ENCODE measurements at regions of chr1 and their contacts with region 1.

Region 1: DNA sequence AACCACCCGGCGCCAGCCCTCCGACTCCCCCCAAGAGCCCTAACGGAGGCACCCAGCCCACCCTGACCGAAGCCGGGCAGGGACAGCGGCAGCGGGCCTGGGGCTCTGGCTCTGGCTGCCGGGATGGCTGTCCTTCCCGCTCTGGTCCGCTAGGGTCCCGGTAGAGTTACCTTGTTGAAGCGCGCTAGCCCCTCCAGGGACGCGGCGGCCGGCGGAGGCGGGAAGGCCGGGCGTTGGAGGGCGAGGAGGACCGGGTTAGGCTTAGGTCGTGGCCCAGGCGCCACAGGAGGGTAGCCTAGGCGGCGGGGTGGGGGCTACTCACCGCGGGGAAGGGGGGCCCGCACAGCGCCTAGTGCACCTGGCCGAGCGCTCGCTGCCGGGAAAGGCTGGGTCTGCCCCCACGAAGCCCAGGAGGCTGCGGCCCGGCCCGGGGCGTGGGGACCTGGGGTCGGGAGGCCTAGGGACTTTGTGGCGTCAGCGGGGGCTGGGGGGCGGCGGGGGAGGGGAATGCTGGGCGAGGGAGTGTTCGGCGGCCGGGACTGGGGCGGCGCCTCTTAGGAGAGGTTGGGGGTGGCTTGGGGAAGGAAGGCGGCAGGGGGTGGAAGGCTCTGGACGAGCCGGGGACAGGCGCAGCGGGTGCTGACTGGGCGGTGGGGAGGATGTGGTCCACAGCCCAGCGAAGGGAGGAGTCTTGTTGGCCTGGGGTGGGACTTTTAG is at the start of gene TRIM17:
- DNase-seq: peak in 1 of 2 experiments; percentile 79
- H3K4me3 ChIP-seq: peak within 1 kb of the TSS; percentile 64
- H3K27ac ChIP-seq: peak within 1 kb of the TSS; percentile 93
- H3K4me1 ChIP-seq: peaks cover 67% of the 10 kb centered on the region
- H3K27me3 ChIP-seq: no peaks in the 10 kb centered on the region
- CTCF ChIP-seq: peak; percentile 63
- total RNA-seq, gene TRIM17: 47.4 and 55.5 TPM in 2 replicates

Region 2: GRCh38 chr1:228120857-228121489 is 295.4 kb before region 1 on chr1:
- CTCF ChIA-PET with region 1: no interaction called
- POLR2A ChIA-PET with region 1: no interaction called
- intact Hi-C with region 1: no loop called
- DNase-seq: no peak
- H3K4me3 ChIP-seq: no peak overlapping the region
- H3K27ac ChIP-seq: no peak overlapping the region
- H3K4me1 ChIP-seq: no peaks in the 10 kb centered on the region
- H3K27me3 ChIP-seq: no peaks in the 10 kb centered on the region
- CTCF ChIP-seq: no peak

Region 3: DNA sequence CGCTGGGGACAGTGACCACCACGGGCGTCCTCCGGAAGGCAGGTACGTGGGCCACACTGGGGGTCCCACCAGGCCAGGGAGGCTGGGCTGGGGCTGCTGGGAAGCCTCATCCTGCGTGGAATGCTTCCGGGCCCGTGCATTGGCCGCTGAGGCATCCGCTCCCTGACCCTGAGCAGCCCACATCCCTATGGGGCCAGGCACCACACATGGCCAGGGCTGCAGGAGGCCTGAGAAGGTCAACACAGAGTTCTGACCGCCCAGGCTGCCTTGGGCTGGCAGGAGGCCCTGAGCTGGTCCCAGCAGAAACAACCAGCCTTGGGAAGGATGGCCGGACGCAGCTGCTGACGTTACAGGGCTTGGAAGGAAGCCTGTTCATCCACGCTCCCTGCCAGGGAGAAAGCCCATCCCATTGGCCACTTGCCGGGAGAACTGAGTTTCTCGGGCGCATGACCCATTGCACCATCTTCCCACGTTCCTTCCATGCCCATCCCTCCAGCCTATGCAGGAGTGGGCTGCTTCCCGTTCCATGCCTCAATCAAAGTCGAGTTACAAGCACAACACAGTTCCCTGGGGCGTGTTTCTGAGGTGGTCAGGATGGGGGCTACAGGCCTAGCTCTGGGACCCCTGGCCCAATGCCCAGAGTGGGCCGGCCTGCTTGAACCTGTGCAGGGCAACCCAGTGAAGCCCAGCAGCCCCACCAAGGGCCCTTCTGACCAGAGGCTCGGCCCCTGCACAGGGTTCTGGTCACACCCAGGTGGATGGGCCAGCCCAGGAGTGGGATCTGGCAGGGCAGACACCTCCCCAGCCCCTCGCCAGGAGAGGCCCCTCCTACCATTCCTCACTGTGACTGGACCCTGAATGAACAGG is 41.4 kb before region 1 on chr1:
- CTCF ChIA-PET with region 1: no interaction called
- POLR2A ChIA-PET with region 1: no interaction called
- intact Hi-C with region 1: no loop called
- DNase-seq: no peak
- H3K4me3 ChIP-seq: no peak overlapping the region
- H3K27ac ChIP-seq: no peak overlapping the region
- H3K4me1 ChIP-seq: peaks cover 28% of the 10 kb centered on the region
- H3K27me3 ChIP-seq: no peaks in the 10 kb centered on the region
- CTCF ChIP-seq: no peak

Region 4: DNA sequence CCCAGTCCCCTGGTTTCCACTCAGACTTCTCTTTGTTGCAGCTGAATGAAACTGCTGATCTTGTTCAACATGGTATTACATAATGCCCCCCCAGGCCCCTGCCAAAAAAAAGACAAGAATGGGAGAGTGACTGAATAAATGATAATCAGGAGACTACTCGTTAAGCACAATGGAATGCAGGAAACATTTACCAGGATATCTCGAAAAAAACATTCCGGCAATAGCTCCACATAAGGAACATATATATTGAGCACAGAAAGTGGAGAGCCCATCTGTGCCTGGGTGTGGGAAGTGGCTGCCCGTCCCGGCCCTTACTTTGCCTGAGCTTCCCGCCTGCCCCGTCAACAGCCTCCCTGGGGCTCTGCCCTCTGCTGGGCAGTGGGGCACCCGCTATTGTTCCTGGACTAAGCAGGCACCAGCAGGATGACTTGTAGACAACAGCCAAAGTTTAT is 23.1 kb before region 1 on chr1:
- CTCF ChIA-PET with region 1: interaction called, 13 read pairs
- POLR2A ChIA-PET with region 1: no interaction called
- intact Hi-C with region 1: no loop called
- DNase-seq: peak; percentile 63 to 79
- H3K4me3 ChIP-seq: no peak overlapping the region
- H3K27ac ChIP-seq: peak overlapping the region; percentile 17; the same call in 1 of the 2 replicates
- H3K4me1 ChIP-seq: peaks cover 20% of the 10 kb centered on the region
- H3K27me3 ChIP-seq: no peaks in the 10 kb centered on the region
- CTCF ChIP-seq: peak; percentile 57; the same call in 1 of the 2 replicates

Region 5: DNA sequence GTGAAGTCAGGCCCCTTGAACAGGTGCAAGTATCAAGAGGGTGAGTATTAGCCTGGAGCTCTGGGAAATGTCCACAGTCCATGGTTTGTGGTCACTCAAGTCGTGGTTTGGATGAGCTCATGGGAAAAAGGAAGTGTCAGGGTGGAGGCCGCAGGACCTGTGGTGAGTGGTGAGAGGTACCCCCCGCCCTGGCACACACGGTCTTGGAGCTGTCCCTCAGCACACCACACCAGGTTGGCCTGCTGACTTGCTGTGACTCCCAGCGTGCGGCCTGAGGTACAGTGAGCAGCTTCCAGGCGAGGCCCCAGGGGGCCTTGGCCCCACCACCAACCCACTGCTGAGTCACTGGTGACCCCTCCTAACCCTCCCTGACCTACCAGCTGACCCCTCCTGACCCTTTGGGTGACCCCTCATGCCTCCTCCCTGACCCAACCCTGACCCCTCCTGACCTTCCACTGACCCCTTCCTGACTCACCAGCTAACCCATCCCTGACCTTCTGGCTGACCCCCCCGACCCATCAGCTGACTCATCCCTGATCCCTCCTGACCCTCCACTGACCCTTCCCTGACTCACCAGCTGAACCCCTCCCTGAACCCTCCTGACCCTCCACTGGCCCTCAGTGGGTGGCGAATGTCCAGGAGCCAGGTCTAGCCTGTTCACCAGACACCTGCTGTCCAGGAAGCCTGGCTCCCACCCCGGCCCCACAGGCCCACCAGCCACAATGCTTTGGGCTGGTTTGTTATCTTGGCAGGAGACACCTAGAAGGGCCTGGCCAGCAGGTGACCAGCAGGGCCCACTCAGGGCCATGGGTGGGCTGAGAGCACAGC is 36.0 kb after region 1 on chr1:
- CTCF ChIA-PET with region 1: no interaction called
- POLR2A ChIA-PET with region 1: interaction called, 6 read pairs
- intact Hi-C with region 1: loop called (anchors 1 kb)
- DNase-seq: peak; percentile 70 to 83
- H3K4me3 ChIP-seq: no peak overlapping the region
- H3K27ac ChIP-seq: peak overlapping the region; percentile 70
- H3K4me1 ChIP-seq: peaks cover 48% of the 10 kb centered on the region
- H3K27me3 ChIP-seq: no peaks in the 10 kb centered on the region
- CTCF ChIP-seq: no peak